ENCODE measurements at regions of chr6 and their contacts with region 1.

Region 1: DNA sequence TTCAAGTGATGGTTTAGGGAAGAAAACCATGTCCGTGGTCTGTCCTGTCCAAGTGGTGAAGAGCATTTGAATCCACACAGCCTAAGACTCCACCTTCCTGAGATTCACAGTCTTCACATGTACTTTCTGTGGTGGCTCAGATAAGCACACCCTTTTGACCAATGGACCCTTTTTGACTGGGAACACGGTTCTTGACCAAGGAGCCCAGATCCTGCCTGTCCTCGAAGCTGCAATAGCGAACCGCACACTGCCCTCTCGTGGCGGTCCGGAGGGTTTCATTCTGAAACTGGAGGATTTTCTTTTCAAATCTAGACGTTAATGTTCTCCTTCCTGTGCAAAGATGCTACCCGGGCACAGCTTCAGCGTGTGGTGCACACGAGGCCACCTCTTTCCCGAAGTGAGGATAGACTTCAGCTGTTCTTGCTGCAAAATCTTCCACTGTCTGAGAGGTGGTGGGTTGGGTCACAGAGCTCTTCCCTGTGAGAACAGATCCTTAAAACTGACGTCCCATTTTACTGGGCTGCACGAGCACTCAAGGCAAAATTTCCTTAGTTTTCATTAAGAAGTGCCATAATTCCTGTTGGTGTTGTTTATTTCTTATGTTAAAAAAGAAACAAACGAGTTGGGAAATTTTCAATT is 90.5 kb downstream of the SYNJ2 start:
- DNase-seq: peak; percentile 57
- ATAC-seq: no peak
- H3K4me3 Mint-ChIP-seq: no peak overlapping the region
- H3K27ac Mint-ChIP-seq: peak overlapping the region; percentile 42
- H3K4me1 Mint-ChIP-seq: peaks cover 3% of the 10 kb centered on the region
- H3K27me3 Mint-ChIP-seq: no peaks in the 10 kb centered on the region
- CTCF ChIP-seq: peak; percentile 74

Region 2: DNA sequence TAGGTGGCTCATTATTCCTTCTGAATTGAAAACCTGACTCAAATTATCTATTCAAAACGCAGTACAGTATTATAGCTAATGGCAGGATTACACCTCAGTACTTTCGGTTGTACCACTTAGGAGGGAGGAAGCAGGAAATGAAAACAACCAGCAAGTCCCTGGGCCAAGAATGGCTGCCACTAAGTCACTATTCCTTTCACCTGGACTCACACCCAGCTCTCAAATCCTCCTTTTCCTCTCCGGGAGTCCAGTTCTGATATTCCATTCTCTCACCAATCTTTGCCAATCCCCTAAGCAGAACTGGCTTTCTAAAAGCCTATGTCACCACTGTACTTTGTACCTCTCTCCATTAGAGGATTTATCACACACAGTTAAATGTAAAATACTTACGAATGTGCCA is 769.5 kb before region 1 on chr6:
- CTCF ChIA-PET with region 1: no interaction called
- POLR2A ChIA-PET with region 1: no interaction called
- intact Hi-C with region 1: no loop called
- DNase-seq: no peak
- ATAC-seq: no peak
- H3K4me3 Mint-ChIP-seq: no peak overlapping the region
- H3K27ac Mint-ChIP-seq: no peak overlapping the region
- H3K4me1 Mint-ChIP-seq: peaks cover 14% of the 10 kb centered on the region
- H3K27me3 Mint-ChIP-seq: no peaks in the 10 kb centered on the region
- CTCF ChIP-seq: no peak

Region 3: DNA sequence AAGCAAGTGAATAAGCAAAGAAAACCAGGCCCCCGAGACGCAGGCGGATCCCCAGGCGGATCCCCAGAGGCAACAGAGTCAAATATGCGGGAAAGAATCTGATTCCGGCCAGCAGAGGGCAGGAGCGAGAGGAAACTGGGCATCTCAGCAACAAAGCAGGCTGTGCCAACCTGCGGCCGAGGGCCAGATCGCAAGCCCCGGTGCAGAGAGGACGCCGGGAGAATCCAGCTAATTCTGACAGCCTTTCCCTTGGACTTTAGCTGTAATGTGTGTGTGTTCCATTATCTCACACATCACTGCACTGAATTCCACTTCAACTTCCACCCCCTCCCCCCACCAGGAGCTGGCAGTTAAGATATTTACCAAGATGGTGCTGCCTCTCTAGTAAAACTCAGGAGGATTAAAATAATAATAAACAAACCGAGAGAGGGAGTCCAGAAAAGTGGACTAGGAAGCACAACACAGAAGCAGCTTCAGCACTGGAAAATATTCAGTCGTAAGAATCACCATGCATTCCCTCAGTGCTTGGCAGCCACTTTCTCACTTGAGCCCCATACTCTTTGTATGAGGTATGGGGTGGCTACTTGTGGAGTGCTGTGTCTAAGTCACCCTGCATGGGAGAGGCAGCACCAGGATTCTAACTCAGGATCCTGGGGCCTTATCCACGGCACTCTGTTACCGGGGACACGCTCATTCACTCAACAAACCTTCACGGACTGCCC is 315.3 kb before region 1 on chr6:
- CTCF ChIA-PET with region 1: interaction called, 7 read pairs
- POLR2A ChIA-PET with region 1: no interaction called
- intact Hi-C with region 1: loop called (anchors 1 kb)
- DNase-seq: peak; percentile 72
- ATAC-seq: peak; percentile 54
- H3K4me3 Mint-ChIP-seq: peak overlapping the region; percentile 38
- H3K27ac Mint-ChIP-seq: no peak overlapping the region
- H3K4me1 Mint-ChIP-seq: peaks cover 69% of the 10 kb centered on the region
- H3K27me3 Mint-ChIP-seq: peaks cover 6% of the 10 kb centered on the region
- CTCF ChIP-seq: peak; percentile 60

Region 4: GRCh38 chr6:157885211-157885788 is 186.9 kb before region 1 on chr6:
- CTCF ChIA-PET with region 1: interaction called, 3 read pairs
- POLR2A ChIA-PET with region 1: no interaction called
- intact Hi-C with region 1: loop called (anchors 2 kb)
- DNase-seq: no peak
- ATAC-seq: peak; percentile 86
- H3K4me3 Mint-ChIP-seq: peak overlapping the region; percentile 24
- H3K27ac Mint-ChIP-seq: peak overlapping the region; percentile 76
- H3K4me1 Mint-ChIP-seq: peaks cover 37% of the 10 kb centered on the region
- H3K27me3 Mint-ChIP-seq: no peaks in the 10 kb centered on the region
- CTCF ChIP-seq: no peak

Region 5: DNA sequence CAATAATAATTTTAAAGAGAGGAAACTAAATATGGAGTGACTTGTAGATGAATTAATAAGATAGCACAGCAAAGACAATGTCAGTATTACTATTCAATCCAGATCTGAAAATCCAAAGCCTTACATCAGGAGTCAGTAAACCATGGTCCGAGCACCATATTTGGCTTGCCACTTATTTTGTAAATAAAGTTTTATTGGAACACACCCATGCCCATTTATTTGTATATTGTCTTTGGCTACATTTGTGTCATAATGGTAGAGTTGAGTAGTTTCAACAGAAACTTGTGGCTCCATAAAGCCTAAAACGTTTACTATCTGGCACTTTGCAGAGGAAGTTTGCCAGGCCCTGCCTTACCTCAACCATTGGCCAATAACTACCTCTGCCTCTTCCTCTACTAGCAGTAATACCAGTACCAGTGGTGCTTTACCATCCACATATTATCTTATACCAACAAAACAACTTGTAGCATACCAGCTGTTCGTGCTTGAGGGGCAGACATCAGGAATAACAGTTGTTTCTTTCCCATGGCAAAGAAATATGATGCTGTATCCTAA is 142.4 kb before region 1 on chr6:
- CTCF ChIA-PET with region 1: no interaction called
- POLR2A ChIA-PET with region 1: interaction called, 3 read pairs
- intact Hi-C with region 1: loop called (anchors 5 kb)
- DNase-seq: no peak
- ATAC-seq: no peak
- H3K4me3 Mint-ChIP-seq: no peak overlapping the region
- H3K27ac Mint-ChIP-seq: no peak overlapping the region
- H3K4me1 Mint-ChIP-seq: no peaks in the 10 kb centered on the region
- H3K27me3 Mint-ChIP-seq: no peaks in the 10 kb centered on the region
- CTCF ChIP-seq: no peak

Region 6: GRCh38 chr6:157946865-157947532 is 125.2 kb before region 1 on chr6:
- CTCF ChIA-PET with region 1: interaction called, 9 read pairs
- POLR2A ChIA-PET with region 1: no interaction called
- intact Hi-C with region 1: loop called (anchors 5 kb)
- DNase-seq: no peak
- ATAC-seq: peak; percentile 42
- H3K4me3 Mint-ChIP-seq: no peak overlapping the region
- H3K27ac Mint-ChIP-seq: no peak overlapping the region
- H3K4me1 Mint-ChIP-seq: peaks cover 7% of the 10 kb centered on the region
- H3K27me3 Mint-ChIP-seq: no peaks in the 10 kb centered on the region
- CTCF ChIP-seq: no peak

Region 7: DNA sequence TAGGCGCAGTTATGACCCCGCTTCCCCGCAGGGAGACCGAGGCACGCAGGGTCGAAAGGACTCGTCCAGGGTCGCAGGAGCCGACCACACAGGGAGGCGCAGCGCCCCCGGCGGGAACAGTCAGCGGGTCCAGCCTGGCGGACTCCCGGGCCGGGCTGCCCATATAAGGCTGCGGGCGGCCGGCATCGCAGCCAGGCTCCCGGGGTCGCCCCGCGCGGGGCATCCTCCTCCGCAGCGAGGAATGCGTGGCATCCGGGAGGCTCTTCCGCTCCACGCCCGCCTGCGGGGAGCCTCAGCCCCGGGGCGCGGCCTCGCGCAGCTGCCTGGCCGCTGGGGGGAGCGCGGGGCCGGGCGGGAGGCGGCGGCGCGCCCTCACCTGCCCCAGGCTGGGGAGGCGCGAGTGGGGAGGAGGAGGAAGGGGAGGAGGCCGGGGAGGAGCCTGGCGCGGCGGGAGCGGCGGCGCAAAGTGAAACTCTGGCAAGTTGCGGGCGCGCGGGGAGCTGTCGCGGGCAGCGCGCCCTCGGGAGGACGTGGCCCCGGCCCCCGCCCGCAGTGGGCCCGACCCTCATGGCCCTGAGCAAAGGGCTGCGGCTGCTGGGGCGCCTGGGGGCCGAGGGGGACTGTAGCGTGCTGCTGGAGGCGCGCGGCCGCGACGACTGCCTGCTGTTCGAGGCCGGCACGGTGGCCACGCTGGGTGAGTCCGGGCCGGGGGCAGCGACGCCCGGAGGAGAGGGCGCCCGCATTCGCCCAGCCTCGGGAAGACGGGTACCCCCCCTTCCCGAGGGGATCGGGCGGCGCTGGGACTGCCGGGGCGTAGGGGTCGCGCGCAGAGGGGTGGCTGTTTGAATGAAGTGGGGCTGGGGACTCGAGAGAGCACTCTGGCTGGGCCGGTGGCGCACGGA is 90.6 kb before region 1 on chr6 and contains the start of gene SYNJ2:
- CTCF ChIA-PET with region 1: interaction called, 12 read pairs
- POLR2A ChIA-PET with region 1: interaction called, 5 read pairs
- intact Hi-C with region 1: loop called (anchors 1 kb)
- DNase-seq: peak; percentile 78
- ATAC-seq: peak; percentile 86
- H3K4me3 Mint-ChIP-seq: peak within 1 kb of the TSS; percentile 89
- H3K27ac Mint-ChIP-seq: peak within 1 kb of the TSS; percentile 77
- H3K4me1 Mint-ChIP-seq: peaks cover 43% of the 10 kb centered on the region
- H3K27me3 Mint-ChIP-seq: no peaks in the 10 kb centered on the region
- CTCF ChIP-seq: no peak
- total RNA-seq, gene SYNJ2: 20.7 and 25.0 TPM in 2 replicates

Measured in activated B cell treated with CpG ODN at 0.5 μM for 24 hours (primary cell).